Heart right ventricle (tissue), 16 donors: ENCODE measurements at regions of chr2 and their contacts with region 1.

Region 1: DNA sequence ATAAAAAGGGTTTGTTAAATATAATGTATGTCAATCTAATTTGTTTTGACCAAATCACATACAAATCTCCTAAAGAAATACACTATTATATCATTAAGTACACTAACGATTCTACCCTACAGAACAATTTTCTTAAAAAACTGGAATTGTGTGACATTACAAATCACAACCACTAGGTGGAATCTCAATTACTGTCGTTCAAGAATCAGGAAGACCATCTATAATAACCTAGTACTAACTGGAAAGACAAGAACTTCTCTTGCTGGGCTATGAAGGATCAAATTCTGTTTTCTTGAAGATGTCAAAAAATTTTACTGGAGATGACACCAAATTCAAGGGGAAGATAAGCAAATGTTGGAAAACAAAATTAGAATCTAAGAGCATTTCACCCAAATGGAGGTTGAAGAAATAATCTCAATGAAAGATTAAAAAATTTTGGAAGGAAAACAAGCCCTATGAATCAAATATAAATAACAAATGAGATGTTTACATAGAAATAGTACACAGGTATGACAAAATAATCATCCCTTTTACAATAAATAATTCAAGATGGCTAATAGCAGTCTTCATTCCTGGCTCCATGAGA is 110.9 kb downstream of the STK39 start:
- DNase-seq: no peak
- ATAC-seq: peak in 1 of 8 donors; percentile 28
- H3K4me3 ChIP-seq: no peak overlapping the region
- H3K27ac ChIP-seq: peak overlapping the region in 3 of 10 donors; percentile 15 to 46 (median 45)
- H3K4me1 ChIP-seq: peaks cover 0 to 47% (median 21%) of the 10 kb centered on the region in 9 donors
- H3K27me3 ChIP-seq: no peaks in the 10 kb centered on the region
- CTCF ChIP-seq: peak; percentile 14 to 65 (median 59)

Region 2: GRCh38 chr2:168107322-168107721 is 29.2 kb before region 1 on chr2:
- intact Hi-C with region 1: no loop called
- DNase-seq: no peak
- ATAC-seq: no peak
- H3K4me3 ChIP-seq: no peak overlapping the region
- H3K27ac ChIP-seq: no peak overlapping the region
- H3K4me1 ChIP-seq: peaks cover 0 to 4% (median 0%) of the 10 kb centered on the region in 9 donors
- H3K27me3 ChIP-seq: no peaks in the 10 kb centered on the region
- CTCF ChIP-seq: no peak

Region 3: DNA sequence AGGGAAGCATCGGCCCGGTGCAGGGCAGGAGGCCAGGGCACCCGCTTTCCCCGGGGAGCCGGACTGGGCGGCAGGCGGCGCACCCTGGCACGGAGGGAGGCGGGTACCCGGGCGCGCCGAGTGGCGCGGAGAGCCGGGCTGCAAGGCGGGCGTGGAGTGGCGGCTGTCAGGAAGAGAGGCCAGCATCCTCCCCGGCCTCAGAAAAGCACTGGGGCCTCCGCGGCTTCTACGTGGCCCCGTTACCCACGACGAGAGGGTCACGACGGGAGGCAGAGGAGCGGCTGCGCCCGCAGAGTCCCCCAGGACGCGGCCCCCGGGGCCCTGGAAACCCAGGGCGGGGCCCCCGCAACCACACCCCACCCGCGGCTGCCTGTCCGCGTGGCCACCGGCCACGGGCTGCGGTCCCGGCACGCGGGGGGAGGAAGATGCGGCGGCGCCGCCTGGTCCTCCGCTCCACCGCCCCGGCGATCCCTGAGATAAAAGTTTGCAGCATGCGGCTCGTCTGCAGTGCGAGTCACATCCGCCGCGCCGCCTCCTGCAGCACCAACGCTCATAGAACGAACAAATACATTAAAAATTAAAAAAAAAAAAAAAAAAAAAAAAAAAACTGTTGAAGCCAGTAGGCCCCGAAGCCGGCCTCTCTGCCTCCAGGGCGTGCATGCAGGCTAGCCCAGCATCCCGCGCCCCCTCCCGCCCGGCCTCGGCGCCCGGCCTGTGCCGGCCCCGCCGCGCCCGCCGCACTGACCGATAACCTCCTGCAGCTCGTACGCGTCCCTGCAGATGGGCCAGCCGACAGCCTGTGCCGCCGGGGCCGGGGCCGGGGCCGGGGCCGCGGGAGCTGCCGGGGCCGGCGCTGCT is 110.2 kb after region 1 on chr2:
- intact Hi-C with region 1: loop called in 9 of 10 experiments (anchors 2 to 10 kb)
- DNase-seq: peak; percentile 52 to 80
- ATAC-seq: peak; percentile 57 to 89 (median 76)
- H3K4me3 ChIP-seq: peak overlapping the region; percentile 53 to 90 (median 82)
- H3K27ac ChIP-seq: peak overlapping the region; percentile 37 to 94 (median 88)
- H3K4me1 ChIP-seq: peaks cover 0 to 48% (median 36%) of the 10 kb centered on the region in 9 donors
- H3K27me3 ChIP-seq: peaks cover 0 to 6% (median 0%) of the 10 kb centered on the region in 7 donors
- CTCF ChIP-seq: peak in 6 of 9 donors; percentile 19 to 57 (median 52)

Region 4: DNA sequence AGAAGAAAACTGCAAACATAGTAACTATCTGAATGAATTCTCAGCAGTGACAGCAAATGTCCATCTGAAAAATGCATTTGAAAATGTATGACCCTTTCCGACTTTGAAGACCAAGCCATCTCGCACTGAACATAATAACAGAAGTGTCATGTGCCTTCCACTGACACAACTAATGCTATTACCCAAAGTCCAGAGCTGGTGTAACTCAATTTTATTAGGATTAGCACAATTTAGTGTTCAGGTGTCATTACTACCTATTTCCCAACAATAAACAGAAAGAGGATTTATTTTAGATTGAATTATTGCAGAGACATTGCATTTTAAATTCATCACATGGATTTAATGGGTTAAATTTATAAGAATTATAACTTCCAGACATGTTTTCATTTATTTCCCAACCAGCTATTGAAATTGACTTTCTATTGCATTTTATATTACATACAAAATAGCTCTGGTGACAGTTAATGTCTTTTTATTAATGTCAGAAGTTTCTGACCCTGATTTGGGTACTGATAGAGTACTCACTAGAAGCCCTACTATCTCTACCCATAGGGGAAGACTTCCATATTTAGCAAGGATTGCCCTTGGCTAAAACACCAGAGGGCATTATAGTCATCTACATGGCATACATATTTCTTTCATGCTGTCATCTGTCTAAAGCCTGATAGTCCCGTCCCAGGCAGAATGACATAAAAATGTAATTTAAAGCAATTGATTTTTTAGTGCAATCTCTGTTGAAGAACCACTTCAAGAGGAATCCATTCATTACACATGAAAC is 117.9 kb after region 1 on chr2:
- intact Hi-C with region 1: loop called in 7 of 10 experiments (anchors 5 to 10 kb)
- DNase-seq: no peak
- ATAC-seq: peak in 7 of 8 donors; percentile 47 to 95 (median 78)
- H3K4me3 ChIP-seq: no peak overlapping the region
- H3K27ac ChIP-seq: peak overlapping the region in 4 of 10 donors; percentile 20 to 30 (median 22)
- H3K4me1 ChIP-seq: peaks cover 0 to 19% (median 0%) of the 10 kb centered on the region in 9 donors
- H3K27me3 ChIP-seq: no peaks in the 10 kb centered on the region
- CTCF ChIP-seq: peak in 3 of 9 donors; percentile 12 to 22 (median 20)

Region 5: GRCh38 chr2:168311261-168311910 is 174.9 kb after region 1 on chr2:
- intact Hi-C with region 1: loop called in 2 of 10 experiments (anchors 10 kb)
- DNase-seq: no peak
- ATAC-seq: peak in 2 of 8 donors; percentile 31 to 32
- H3K4me3 ChIP-seq: no peak overlapping the region
- H3K27ac ChIP-seq: peak overlapping the region in 1 of 10 donors; percentile 14
- H3K4me1 ChIP-seq: peaks cover 0 to 26% (median 11%) of the 10 kb centered on the region in 9 donors
- H3K27me3 ChIP-seq: no peaks in the 10 kb centered on the region
- CTCF ChIP-seq: no peak

Region 6: DNA sequence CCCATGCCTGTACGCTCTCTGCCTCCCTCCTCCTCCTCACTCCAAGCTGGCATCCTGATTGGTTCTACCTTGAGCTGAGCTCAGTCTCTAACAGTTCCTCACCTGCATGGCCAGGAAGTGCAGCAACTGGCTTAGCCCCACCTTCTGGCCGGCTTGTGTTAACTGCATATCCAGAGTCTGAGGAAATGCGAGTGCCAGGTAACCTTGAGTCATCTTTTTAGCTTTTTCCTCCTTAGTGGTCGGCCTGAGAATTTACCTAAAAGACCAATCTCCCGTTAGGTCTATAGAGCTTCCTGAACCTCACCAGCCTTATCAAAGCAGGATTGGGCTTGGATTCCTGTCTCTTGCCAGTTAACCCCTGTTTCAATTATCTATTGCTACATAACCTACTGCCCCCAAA is 200.4 kb after region 1 on chr2:
- intact Hi-C with region 1: loop called in 5 of 10 experiments (anchors 5 to 10 kb)
- DNase-seq: peak in 1 of 2 donors; percentile 17
- ATAC-seq: peak in 5 of 8 donors; percentile 33 to 72 (median 68)
- H3K4me3 ChIP-seq: no peak overlapping the region
- H3K27ac ChIP-seq: no peak overlapping the region
- H3K4me1 ChIP-seq: no peaks in the 10 kb centered on the region
- H3K27me3 ChIP-seq: no peaks in the 10 kb centered on the region
- CTCF ChIP-seq: peak in 6 of 9 donors; percentile 31 to 55 (median 44)